GM23248 (cell line): ENCODE measurements at regions of chr10 and their contacts with region 1.

Region 1: DNA sequence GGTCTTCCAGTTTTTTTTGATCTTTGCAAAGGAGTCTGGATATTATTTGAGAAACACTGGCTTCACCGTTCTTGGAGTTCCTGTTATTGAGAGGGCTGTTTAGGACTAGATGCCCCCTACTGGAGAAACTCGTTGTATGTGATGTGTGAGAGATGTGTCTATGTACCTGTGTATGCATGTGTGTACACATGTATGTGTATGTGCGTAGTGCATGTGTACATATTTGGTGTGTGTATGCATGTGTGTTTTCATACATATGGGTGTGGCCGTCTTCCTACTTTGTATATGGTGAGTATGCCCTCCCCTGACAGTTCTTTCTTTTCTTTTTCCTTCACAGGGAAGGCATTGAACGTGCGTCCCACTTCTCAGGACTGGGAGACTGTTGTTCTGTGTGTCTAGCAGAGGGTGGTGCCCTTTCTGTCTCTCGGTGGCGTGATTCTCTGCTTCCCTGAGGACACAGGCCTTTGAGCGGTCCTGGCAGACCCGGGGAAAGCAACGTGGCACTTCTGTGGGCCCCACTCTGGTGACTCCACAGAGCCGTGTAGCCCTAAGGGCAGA is 3.0 kb upstream of the CALHM3 start:
- DNase-seq: peak; percentile 82
- H3K4me3 ChIP-seq: no peak overlapping the region
- H3K27ac ChIP-seq: no peak overlapping the region
- H3K4me1 ChIP-seq: peaks cover 15% of the 10 kb centered on the region
- H3K27me3 ChIP-seq: no peaks in the 10 kb centered on the region

Region 2: DNA sequence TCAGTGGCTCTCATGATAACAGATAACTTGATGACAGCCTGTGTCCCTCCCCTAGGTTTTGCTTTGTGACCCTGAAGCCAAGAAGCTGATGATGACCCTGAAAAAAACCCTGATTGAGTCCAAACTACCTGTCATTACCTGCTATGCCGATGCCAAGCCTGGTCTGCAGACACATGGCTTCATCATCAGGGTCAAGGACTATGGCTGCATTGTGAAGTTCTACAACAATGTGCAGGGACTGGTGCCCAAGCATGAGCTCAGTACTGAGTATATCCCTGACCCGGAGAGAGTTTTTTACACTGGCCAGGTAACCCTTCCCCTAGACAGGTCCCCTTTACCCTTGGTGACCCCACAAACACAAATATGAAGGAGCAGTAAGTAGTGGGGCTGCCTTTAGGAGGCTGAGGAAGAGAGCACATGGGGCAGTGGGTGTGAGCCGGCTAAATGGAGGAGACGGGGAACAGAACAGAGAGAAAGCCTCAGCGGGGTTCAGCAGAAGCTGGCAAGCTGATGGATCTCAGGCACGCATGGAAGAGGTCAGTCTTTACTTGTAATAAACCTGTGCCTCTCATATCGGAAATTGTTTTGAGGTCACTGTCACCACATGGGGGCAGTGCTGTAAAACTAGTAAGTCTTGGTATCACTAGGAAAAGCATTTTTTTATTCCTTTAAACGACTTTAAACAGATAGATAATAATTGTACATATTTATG is 65.5 kb before region 1 on chr10:
- in situ Hi-C with region 1: loop called (anchors 10 kb)
- DNase-seq: peak; percentile 77
- H3K4me3 ChIP-seq: no peak overlapping the region
- H3K27ac ChIP-seq: no peak overlapping the region
- H3K4me1 ChIP-seq: no peaks in the 10 kb centered on the region
- H3K27me3 ChIP-seq: no peaks in the 10 kb centered on the region